Activated naive CD4-positive, alpha-beta T cell treated with anti-CD3 and anti-CD28 coated beads for 36 hours (primary cell): ENCODE measurements at regions of chr19 and their contacts with region 1.

Region 1: GRCh38 chr19:43784981-43785808 is 4.4 kb upstream of the KCNN4 start:
- DNase-seq: peak; percentile 75
- H3K4me3 Mint-ChIP-seq: peak overlapping the region; percentile 66
- H3K27ac Mint-ChIP-seq: peak overlapping the region; percentile 95
- H3K4me1 Mint-ChIP-seq: peaks cover 39% of the 10 kb centered on the region
- H3K27me3 Mint-ChIP-seq: no peaks in the 10 kb centered on the region

Region 2: GRCh38 chr19:43526884-43527859 is 258.0 kb before region 1 on chr19 and contains the start of gene ETHE1:
- CTCF ChIA-PET with region 1: no interaction called
- intact Hi-C with region 1: loop called (anchors 5 kb)
- DNase-seq: peak; percentile 73
- H3K4me3 Mint-ChIP-seq: peak within 1 kb of the TSS; percentile 97
- H3K27ac Mint-ChIP-seq: peak within 1 kb of the TSS; percentile 96
- H3K4me1 Mint-ChIP-seq: peaks cover 22% of the 10 kb centered on the region
- H3K27me3 Mint-ChIP-seq: no peaks in the 10 kb centered on the region
- total RNA-seq, gene ETHE1: 62.1 to 64.4 TPM

Region 3: DNA sequence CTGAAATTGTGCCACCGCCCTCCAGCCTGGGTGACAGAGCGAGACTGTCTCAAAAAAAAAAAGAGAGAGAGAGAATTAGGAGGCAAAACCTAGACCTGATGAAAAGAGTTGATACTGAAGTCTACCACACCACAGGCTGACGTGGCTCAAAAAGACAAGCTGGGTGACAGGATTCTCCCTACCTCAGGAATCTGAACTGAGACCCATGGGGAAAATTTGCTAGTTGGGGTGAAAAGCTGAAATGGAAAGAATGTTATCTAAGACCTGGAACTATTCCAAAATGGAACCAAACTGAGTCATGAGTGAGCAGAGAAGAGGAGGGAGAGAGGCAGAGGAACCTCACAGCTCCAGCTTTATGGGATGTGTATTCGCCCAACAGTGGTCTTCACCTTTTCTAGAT is 42.2 kb before region 1 on chr19:
- CTCF ChIA-PET with region 1: interaction called, 29 read pairs
- intact Hi-C with region 1: loop called (anchors 1 kb)
- DNase-seq: no peak
- H3K4me3 Mint-ChIP-seq: no peak overlapping the region
- H3K27ac Mint-ChIP-seq: no peak overlapping the region
- H3K4me1 Mint-ChIP-seq: peaks cover 12% of the 10 kb centered on the region
- H3K27me3 Mint-ChIP-seq: no peaks in the 10 kb centered on the region

Region 4: GRCh38 chr19:43809762-43810696 is 24.8 kb after region 1 on chr19:
- CTCF ChIA-PET with region 1: interaction called, 4 read pairs
- intact Hi-C with region 1: loop called (anchors 1 kb)
- DNase-seq: no peak
- H3K4me3 Mint-ChIP-seq: no peak overlapping the region
- H3K27ac Mint-ChIP-seq: no peak overlapping the region
- H3K4me1 Mint-ChIP-seq: peaks cover 2% of the 10 kb centered on the region
- H3K27me3 Mint-ChIP-seq: peaks cover 3% of the 10 kb centered on the region